Mammary epithelial cell (primary cell): ENCODE measurements at regions of chr4 and their contacts with region 1.

Region 1: DNA sequence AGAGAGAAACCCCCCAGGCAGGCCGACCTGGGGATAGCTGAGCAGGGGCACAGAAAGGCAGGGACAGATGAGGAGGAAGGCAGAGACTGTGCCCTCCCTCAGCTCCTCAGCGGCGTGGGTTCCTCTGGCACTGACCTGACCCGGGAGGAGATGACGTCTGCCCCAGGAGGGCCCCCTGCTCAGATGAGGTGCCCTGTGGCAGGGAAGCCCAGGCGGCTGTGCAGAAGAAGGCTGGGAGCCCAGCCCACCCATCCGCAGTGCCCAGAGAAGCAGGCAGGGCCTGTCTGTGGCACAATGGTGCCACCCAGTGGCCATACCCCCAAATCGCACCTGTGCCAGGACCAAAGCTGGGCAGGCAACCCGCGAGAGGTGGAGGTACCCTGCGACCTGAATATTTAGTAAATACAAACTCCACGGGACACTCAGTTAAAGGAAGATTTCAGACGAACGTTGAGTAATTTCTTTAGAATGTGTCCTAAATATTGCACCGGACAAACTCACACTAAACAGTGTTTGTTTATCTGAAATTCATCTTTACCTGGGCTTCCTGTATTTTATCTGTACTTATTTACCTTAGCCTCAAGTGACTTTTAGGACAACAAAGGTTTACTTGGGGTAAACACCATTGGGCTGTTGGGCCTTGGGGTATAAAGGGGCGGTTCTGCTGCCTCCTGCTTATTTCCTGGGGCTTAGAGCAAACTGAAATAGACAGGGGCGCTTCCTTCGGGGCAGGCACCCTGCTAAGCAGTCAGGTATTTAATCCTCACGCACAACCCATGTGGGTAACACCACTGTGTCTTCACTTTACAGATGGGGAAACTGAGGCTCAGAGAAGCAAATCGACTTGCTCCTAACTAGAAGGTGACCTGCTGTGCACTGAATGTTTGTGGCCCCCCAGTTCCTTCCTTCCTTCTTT is 46.5 kb upstream of the HMX1 start:
- DNase-seq: peak; percentile 19
- H3K4me3 ChIP-seq: no peak overlapping the region
- H3K27ac ChIP-seq: no peak overlapping the region
- H3K4me1 ChIP-seq: no peaks in the 10 kb centered on the region
- H3K27me3 ChIP-seq: no peaks in the 10 kb centered on the region
- CTCF ChIP-seq: peak; percentile 68 to 91

Region 2: DNA sequence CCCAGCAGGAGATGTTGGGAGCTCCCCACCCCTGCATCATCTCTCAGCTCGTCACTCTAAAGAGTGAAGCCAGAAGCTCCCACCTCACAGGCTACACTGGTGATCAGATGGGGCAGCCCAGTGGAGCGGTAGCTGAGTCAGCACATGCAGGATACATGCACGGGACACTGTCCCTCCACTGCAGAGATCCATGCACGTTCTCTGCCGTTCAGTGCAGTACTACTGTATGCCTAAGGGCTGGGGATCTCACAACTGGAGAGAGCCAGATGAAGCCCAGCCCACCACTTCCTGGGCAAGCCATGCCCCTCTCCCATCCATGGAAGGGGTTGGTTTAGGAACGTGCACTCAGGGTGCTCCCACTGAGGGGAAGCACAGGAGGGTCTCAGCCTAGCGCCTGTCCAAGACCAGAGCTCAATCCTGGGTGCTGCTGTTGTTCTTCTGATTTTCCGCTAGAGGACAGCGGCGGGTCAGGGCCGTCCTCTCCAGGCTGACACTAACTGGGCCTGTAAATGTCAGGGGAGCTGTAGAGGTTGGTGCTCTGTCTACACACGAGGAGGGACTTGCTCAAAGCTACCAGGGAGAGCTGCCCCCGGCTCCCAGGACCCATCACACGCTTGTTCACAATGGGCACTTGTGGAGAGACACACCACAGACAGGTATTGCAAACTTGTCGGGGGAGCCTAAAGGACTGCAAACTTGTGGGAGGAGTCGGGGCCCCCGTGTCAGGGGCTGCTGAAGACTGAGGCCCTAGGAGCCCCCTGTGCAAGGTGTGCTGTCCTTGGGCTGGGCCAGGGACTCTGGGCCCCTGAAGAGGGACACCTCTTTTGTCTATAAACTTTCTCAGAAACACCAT is 741.4 kb before region 1 on chr4:
- CTCF ChIA-PET with region 1: no interaction called
- dilution Hi-C with region 1: no loop called
- in situ Hi-C with region 1: no loop called
- intact Hi-C with region 1: loop called (anchors 10 kb)
- DNase-seq: peak; percentile 51
- H3K4me3 ChIP-seq: no peak overlapping the region
- H3K27ac ChIP-seq: no peak overlapping the region
- H3K4me1 ChIP-seq: peaks cover 2% of the 10 kb centered on the region
- H3K27me3 ChIP-seq: no peaks in the 10 kb centered on the region
- CTCF ChIP-seq: peak; percentile 96 to 98

Region 3: DNA sequence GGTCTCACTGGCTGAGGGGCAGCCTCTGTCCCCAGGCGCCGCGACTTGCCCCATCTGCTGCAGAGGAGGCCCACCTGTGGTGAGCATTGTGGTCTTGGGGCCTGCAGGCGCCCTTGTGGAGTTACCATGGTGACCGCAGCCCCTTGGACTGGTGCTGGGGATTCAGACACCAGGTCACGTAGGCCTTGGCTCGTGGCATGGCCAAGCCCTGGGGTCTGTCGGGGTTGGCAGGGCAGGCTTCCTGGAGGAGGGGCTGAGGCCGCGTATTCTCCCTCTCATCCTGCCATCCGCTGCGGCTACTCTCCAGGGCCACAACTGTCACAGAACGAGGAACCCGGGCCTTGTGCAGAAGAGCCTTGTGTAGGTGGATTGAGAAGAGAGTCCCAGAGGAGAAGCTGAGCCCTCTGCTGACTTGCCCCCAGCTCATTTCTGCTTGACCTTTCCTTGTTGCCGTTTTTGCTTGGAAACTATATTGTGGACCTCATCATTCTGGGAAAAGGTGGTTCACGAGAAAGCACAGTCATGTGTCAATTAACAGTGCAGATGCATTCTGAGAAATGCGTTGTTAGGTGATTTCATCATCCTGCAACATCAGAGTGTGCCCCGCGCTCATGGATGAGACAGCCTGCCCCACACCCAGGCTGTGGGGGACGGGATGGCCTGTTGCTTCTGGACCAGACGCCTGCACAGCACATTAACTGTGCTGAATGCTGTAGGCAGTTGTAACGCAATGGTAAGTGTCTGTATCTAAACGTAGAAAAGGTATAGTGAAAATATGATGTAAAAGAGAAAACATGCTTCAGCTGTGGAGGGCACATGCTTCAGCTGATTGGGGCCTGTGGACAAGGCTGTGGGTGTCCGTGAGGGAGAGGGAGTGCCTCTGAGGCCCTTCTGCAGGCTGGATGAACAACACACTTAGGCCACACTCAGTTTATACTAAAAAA is 439.1 kb before region 1 on chr4:
- CTCF ChIA-PET with region 1: no interaction called
- dilution Hi-C with region 1: loop called (anchors 25 kb)
- in situ Hi-C with region 1: loop called in 1 of 2 experiments (anchors 25 kb)
- intact Hi-C with region 1: no loop called
- DNase-seq: no peak
- H3K4me3 ChIP-seq: no peak overlapping the region
- H3K27ac ChIP-seq: no peak overlapping the region
- H3K4me1 ChIP-seq: no peaks in the 10 kb centered on the region
- H3K27me3 ChIP-seq: no peaks in the 10 kb centered on the region
- CTCF ChIP-seq: no peak

Region 4: DNA sequence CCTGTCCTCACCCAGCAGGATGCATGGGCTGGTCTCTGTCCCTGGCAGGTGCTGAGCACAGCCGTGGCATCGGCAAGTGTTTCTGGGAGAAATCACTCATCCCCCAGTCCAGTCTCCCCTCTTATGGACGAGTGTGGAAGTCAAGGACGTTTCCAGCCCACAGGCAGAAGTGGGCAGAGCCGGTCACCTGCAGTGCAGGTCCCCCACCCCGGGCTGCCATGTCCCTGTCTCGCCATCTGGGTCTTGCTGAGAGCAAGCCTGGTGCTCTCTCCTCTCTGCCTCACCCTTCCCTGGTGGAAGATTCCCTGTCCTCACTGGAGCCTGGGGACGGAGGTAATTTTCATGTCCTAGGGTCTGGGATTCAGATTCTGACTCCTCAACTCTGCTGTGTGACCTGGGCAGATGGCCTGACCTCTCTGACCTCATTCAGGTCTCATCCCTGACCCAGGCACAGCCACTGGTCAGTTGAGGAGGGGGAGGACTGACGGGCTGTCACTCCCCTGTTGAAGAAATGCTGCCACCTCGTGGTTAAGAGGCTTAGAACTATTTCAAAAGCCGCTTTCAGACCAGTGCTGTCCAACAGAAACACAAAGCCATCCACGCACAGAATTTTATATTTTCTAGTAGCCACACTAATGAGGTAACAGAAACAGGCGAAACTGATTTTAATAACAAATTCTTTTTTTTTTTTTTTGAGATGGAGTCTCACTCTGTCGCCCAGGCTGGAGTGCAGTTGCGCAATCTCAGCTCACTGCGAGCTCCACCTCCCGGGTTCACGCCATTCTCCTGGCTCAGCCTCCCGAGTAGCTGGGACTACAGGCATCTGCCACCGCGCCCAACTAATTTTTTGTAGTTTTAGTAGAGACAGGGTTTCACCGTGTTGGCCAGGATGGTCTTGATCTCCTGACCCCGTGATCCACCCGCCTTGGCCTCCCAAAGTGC is 323.8 kb before region 1 on chr4:
- CTCF ChIA-PET with region 1: no interaction called
- dilution Hi-C with region 1: no loop called
- in situ Hi-C with region 1: no loop called
- intact Hi-C with region 1: loop called (anchors 5 kb)
- DNase-seq: peak; percentile 49
- H3K4me3 ChIP-seq: no peak overlapping the region
- H3K27ac ChIP-seq: no peak overlapping the region
- H3K4me1 ChIP-seq: no peaks in the 10 kb centered on the region
- H3K27me3 ChIP-seq: peaks cover 14% of the 10 kb centered on the region
- CTCF ChIP-seq: peak; percentile 55 to 80

Region 5: GRCh38 chr4:8615921-8616785 is 302.0 kb before region 1 on chr4:
- CTCF ChIA-PET with region 1: no interaction called
- dilution Hi-C with region 1: no loop called
- in situ Hi-C with region 1: loop called (anchors 10 to 25 kb)
- intact Hi-C with region 1: no loop called
- DNase-seq: no peak
- H3K4me3 ChIP-seq: no peak overlapping the region
- H3K27ac ChIP-seq: no peak overlapping the region
- H3K4me1 ChIP-seq: no peaks in the 10 kb centered on the region
- H3K27me3 ChIP-seq: no peaks in the 10 kb centered on the region
- CTCF ChIP-seq: no peak